Heart left ventricle (tissue), 16 donors: ENCODE measurements at regions of chr19 and their contacts with region 1.

Region 1: DNA sequence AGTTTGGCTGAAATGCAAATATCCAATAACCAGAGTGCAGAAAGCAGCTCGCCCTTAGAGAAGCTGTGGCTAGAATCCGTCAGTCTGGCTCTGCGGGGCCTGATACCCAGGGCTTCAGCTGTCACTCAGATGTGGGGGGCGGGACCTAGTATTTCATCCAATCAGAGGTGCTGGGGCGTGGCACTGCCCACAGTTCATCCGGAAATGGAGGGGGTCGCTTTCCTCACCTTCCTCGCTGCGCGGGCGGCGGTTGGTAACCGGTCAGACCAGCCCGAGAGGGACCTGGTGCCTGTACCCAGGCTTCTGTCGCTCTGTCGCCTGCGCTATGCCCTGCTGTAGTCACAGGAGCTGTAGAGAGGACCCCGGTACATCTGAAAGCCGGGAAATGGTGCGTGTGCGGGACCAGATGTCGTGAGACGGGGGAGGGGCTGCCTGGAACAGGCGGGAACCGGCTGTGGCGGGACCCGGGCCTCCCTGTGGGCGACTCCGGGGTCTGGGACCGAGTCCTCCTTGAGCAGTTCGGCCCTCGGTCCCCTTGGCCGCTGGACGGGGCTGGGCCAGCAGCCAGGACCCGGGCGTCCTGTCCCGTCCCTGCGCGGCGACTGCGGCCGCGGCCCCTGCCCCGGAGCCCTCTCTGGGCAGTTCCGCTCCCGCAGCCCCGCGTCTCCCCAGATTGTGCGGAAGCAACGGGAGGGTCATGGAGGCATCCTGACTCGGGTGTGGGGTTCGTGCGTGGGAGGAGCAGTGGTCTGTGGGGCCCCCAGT is at the start of gene ZNF700:
- DNase-seq: peak; percentile 94 to 96 (median 95)
- ATAC-seq: peak; percentile 98 to 99 (median 99)
- H3K4me3 ChIP-seq: peak within 1 kb of the TSS; percentile 57 to 100 (median 92)
- H3K27ac ChIP-seq: peak within 1 kb of the TSS; percentile 79 to 99 (median 92)
- H3K4me1 ChIP-seq: peaks cover 0 to 35% (median 12%) of the 10 kb centered on the region in 12 donors
- H3K27me3 ChIP-seq: no peaks in the 10 kb centered on the region
- CTCF ChIP-seq: no peak
- POLR2A ChIP-seq: peak in 1 of 2 donors; percentile 77
- total RNA-seq, gene ZNF700: 2.2 to 7.5 (median 4.1) TPM

Region 2: GRCh38 chr19:11881151-11881800 is 43.8 kb before region 1 on chr19:
- intact Hi-C with region 1: loop called in 4 of 10 experiments (anchors 5 kb)
- DNase-seq: peak in 4 of 5 donors; percentile 37 to 48 (median 43)
- ATAC-seq: peak in 3 of 4 donors; percentile 76 to 83 (median 79)
- H3K4me3 ChIP-seq: peak overlapping the region in 2 of 12 donors; percentile 8 to 17
- H3K27ac ChIP-seq: no peak overlapping the region
- H3K4me1 ChIP-seq: peaks cover 0 to 4% (median 0%) of the 10 kb centered on the region in 12 donors
- H3K27me3 ChIP-seq: no peaks in the 10 kb centered on the region
- CTCF ChIP-seq: peak; percentile 51 to 81 (median 72)
- POLR2A ChIP-seq: no peak

Region 3: DNA sequence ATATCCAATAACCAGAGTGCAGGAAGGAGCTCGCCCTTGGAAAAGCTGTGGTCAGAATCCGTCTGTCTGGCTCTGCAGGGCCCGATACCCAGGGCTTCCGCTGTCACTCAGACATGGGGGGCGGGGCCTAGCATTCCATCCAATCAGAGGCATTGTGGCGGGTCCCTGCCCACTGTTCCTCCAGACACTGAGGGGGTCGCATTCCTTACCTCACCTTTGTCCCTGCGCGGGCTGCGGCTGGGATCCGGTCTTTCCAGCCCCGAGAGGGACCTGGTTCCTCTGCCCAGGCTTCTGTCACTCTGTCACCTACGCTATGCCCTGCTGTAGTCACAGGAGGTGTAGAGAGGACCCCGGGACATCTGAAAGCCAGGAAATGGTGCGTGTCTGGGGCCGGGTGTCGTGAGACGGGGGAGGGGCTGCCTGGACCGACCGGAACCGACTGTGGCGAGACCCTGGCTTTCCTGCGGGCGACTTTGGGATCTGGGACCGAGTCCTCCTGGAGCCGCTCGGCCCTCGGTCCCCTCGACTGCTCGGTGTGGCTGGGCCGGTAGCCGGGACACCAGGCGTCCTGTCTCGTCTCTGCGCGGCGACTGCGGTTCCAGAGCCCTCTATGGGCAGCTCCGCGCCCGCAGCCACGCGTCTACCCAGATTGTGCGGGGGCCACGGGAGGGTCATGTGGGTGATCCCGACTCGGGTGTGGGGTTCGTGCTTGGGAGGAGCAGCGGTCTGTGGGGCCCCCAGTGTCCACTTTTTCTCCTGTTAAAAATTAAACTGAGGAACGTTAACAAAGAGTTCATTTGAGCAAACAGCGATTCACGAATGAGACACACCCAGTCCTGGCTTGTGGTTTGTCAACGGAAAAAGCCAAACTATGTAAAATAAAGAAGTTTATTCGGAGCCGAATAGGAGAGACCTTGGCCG is 37.2 kb before region 1 on chr19 and contains the start of gene ZNF69:
- intact Hi-C with region 1: loop called in 4 of 10 experiments (anchors 5 kb)
- DNase-seq: peak; percentile 88 to 94 (median 89)
- ATAC-seq: peak; percentile 95 to 100 (median 99)
- H3K4me3 ChIP-seq: peak within 1 kb of the TSS; percentile 66 to 85 (median 70)
- H3K27ac ChIP-seq: peak within 1 kb of the TSS; percentile 10 to 90 (median 84)
- H3K4me1 ChIP-seq: peaks cover 0 to 15% (median 9%) of the 10 kb centered on the region in 12 donors
- H3K27me3 ChIP-seq: no peaks in the 10 kb centered on the region
- CTCF ChIP-seq: peak in 4 of 12 donors; percentile 23 to 51 (median 33)
- POLR2A ChIP-seq: peak in 1 of 2 donors; percentile 44
- total RNA-seq, gene ZNF69: 2.8 to 5.4 (median 4.2) TPM

Region 4: DNA sequence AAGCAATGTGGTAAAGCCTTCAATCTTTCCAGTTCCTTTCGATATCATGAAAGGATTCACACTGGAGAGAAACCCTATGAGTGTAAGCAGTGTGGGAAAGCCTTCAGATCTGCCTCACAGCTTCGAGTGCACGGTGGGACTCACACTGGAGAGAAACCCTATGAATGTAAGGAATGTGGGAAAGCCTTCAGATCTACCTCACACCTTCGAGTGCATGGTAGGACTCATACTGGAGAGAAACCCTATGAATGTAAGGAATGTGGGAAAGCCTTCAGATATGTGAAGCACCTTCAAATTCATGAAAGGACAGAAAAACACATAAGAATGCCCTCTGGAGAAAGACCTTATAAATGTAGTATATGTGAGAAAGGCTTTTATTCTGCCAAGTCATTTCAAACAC is 24.1 kb after region 1 on chr19:
- intact Hi-C with region 1: no loop called
- DNase-seq: no peak
- ATAC-seq: no peak
- H3K4me3 ChIP-seq: no peak overlapping the region
- H3K27ac ChIP-seq: no peak overlapping the region
- H3K4me1 ChIP-seq: no peaks in the 10 kb centered on the region
- H3K27me3 ChIP-seq: no peaks in the 10 kb centered on the region
- CTCF ChIP-seq: no peak
- POLR2A ChIP-seq: no peak

Region 5: DNA sequence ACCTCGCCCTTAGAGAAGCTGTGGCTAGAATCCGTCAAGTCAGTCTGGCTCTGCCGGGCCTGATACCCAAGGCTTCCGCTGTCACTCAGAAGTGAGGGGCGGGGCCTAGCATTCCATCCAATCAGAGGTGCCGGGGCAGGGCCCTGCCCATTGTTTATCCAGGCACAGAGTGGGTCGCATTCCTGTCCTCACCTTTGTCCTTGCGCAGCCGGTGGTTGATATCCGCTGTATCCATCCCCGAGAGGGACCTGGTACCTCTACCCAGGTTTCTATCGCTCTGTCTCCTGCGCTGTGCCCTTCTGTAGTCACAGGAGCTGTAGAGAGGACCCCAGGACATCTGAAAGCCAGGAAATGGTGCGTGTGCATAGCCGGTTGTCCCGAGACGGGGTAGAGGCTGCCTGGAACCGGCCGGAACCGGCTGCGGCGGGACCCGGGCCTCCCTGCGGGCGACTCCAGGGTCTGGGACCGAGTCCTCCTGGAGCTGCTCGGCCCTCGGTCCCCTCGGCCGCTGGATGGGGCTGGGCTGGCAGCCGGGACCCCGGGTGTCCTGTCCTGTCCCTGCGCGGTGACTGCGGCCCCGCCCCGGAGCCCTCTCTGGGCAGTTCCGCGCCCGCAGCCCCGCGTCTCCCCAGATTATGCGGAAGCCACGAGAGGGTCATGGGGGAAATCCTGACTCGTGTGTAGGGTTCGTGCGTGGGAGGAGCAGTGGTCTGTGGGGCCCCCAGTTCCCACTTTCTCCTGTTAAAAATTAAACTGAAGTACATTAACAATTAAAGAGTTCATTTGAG is 40.0 kb after region 1 on chr19 and contains the start of gene ZNF763:
- intact Hi-C with region 1: loop called in 6 of 10 experiments (anchors 1 to 2 kb)
- DNase-seq: peak; percentile 94 to 97 (median 95)
- ATAC-seq: peak; percentile 99
- H3K4me3 ChIP-seq: peak within 1 kb of the TSS; percentile 59 to 94 (median 78)
- H3K27ac ChIP-seq: peak within 1 kb of the TSS; percentile 73 to 99 (median 92)
- H3K4me1 ChIP-seq: peaks cover 0 to 22% (median 13%) of the 10 kb centered on the region in 12 donors
- H3K27me3 ChIP-seq: no peaks in the 10 kb centered on the region
- CTCF ChIP-seq: peak in 1 of 12 donors; percentile 0
- POLR2A ChIP-seq: peak in 1 of 2 donors; percentile 83
- total RNA-seq, gene ZNF763: 1.3 to 6.2 (median 5.0) TPM

Region 6: DNA sequence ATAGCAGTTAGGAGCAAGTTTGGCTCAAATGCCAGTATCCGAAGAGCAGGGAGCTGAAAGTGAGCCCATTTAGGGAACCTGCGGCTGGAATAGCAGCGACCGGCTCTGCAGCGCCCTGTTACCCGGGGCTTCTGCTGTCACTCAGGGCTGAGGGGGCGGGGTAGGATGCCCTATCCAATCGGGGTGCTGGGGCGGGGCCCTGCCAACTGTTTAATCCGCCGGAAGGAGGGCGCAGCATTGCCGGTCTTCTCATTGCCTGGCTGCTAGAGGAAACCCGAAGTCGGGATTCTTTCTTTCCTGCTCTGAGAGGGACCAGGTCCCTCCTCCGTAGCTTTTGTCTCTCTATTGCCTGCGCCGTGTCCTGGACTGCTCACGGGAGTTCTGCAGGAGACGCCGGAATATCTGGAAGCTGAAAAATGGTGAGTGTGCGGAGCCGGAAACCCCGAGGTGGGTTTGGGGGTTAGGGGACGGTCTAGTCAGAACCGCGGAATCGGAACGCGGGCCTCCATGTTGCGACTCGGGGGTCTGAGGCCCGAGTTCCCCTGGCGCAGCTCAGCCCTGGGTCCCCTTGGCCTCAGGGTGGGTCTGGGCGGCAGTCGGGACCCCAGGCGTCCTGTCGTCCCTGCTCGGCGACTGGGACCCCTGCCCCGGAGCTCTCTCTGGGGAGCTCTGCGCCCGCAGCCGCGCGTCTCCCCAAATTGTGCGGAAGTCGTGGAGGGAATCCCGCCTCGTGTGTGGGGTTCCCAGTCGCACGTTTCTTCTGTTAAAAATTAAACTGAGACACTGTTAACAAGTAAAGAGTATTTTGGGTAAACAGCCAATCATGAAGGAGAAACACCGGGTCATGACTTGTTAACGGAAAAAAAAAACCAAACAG is 62.6 kb after region 1 on chr19:
- intact Hi-C with region 1: loop called (anchors 1 to 10 kb)
- DNase-seq: peak; percentile 95 to 99 (median 97)
- ATAC-seq: peak; percentile 100
- H3K4me3 ChIP-seq: peak overlapping the region; percentile 59 to 96 (median 87)
- H3K27ac ChIP-seq: peak overlapping the region; percentile 55 to 95 (median 88)
- H3K4me1 ChIP-seq: peaks cover 0 to 11% (median 0%) of the 10 kb centered on the region in 12 donors
- H3K27me3 ChIP-seq: no peaks in the 10 kb centered on the region
- CTCF ChIP-seq: peak in 2 of 12 donors; percentile 2 to 8
- POLR2A ChIP-seq: peak in 1 of 2 donors; percentile 79

Region 7: DNA sequence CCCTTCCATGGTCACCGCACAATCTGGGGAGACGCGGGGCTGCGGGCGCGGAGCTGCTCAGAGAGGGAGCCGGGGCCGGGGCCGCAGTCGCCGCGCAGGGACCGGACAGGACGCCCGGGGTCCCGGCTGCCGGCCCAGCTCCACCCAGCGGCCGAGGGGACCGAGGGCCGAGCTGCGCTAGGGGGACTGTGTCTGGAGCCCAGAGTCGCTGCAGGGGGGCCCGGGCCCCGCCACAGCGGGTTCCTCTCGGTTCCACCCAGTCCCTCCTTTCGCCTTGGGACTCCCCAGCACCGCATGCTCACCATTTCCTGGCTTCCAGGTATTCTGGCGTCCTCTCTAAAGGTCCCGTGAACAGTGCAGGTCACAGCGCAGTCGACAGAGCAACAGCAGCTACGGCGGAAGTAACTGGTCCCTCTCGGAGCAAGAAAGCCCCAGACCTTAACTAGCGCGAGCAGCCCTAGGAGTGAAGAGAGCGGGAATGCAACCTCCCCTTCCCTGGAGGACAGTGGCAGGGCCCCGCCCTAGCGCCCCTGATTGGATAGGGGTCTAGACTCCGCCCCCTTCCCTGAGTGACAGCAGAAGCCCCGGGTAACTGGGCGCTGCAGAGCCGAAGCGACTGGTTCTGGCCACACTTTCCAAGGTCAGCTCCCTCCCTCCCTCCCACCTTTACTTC is 127.6 kb after region 1 on chr19 and contains the start of gene ZNF878:
- intact Hi-C with region 1: loop called in 1 of 10 experiments (anchors 5 kb)
- DNase-seq: peak; percentile 90 to 95 (median 92)
- ATAC-seq: peak; percentile 100
- H3K4me3 ChIP-seq: peak within 1 kb of the TSS; percentile 59 to 85 (median 68)
- H3K27ac ChIP-seq: peak within 1 kb of the TSS in 11 of 12 donors; percentile 20 to 79 (median 66)
- H3K4me1 ChIP-seq: peaks cover 0 to 18% (median 2%) of the 10 kb centered on the region in 12 donors
- H3K27me3 ChIP-seq: no peaks in the 10 kb centered on the region
- CTCF ChIP-seq: peak in 5 of 12 donors; percentile 7 to 32 (median 26)
- POLR2A ChIP-seq: peak; percentile 71 to 94
- total RNA-seq, gene ZNF878: 0.16 to 0.24 (median 0.22) TPM in 4 of 9 donors, not detected in the others

Region 8: GRCh38 chr19:12610540-12611360 is 685.7 kb after region 1 on chr19 and contains the starts of genes ZNF490 and ZNF791:
- intact Hi-C with region 1: loop called in 1 of 10 experiments (anchors 10 kb)
- DNase-seq: peak; percentile 97 to 99 (median 99)
- ATAC-seq: peak; percentile 99
- H3K4me3 ChIP-seq: peak within 1 kb of the TSS; percentile 77 to 99 (median 90)
- H3K27ac ChIP-seq: peak within 1 kb of the TSS; percentile 82 to 99 (median 98)
- H3K4me1 ChIP-seq: peaks cover 0 to 53% (median 29%) of the 10 kb centered on the region in 12 donors
- H3K27me3 ChIP-seq: no peaks in the 10 kb centered on the region
- CTCF ChIP-seq: peak in 2 of 12 donors; percentile 17 to 22
- POLR2A ChIP-seq: peak; percentile 81 to 83
- total RNA-seq, gene ZNF490: 3.7 to 8.9 (median 5.3) TPM
- total RNA-seq, gene ZNF791: 9.4 to 22.6 (median 14.3) TPM